Right cardiac atrium (tissue), 5 donors: ENCODE measurements at regions of chr7 and their contacts with region 1.

Region 1: DNA sequence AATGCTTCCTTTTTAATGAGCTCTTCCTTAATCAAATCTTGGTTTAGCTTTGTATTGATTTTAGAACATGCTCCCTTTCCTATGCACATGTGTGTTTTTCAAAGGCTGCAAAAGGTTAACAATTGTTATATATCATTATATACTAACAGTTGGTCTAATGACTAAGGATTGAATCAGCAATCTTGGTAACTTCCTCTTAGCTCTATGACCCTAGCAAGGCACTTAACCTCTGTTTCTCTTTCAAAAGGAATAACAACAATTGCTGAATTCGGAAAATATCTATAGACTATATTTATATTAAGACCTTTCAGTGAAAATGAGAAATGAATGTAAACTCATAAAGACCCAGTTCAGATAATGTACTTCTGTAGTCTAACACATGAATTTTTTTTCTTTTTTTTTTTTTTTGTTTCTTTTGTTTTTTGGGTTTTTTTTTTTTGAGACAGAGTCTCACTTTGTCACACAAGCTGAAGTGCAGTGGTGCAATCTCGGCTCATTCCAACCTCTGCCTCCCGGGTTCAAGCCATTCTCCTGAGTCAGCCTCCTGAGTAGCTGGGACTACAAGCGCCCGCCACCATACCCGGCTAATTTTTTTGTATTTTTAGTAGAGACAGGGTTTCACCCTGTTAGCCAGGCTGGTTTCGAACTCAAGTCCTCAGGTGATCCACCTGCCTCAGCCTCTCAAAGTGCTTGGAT is 48.8 kb downstream of the HOXA1 start:
- DNase-seq: no peak
- ATAC-seq: no peak
- H3K4me3 ChIP-seq: no peak overlapping the region
- H3K27ac ChIP-seq: no peak overlapping the region
- H3K4me1 ChIP-seq: no peaks in the 10 kb centered on the region
- H3K27me3 ChIP-seq: no peaks in the 10 kb centered on the region

Region 2: DNA sequence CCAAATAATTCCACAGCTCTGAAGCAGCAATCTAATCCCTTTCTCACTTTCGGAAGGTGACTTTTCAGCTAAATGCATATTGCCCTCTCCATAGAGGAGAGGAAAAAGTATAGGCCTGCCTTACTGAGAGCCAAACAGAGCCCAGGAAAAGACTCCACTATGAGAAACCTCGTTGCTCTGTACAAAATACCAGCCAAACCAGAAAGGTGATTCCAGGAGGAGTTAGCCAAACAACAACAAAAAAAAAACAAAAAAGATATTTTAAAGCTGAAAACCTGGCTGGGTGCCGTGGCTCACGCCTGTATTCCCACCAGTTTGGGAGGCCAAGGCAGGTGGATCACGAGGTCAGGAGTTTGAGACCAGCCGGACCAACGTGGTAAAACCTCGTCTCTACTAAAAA is 21.7 kb before region 1 on chr7:
- intact Hi-C with region 1: loop called in 1 of 4 experiments (anchors 2 kb)
- DNase-seq: no peak
- ATAC-seq: no peak
- H3K4me3 ChIP-seq: no peak overlapping the region
- H3K27ac ChIP-seq: no peak overlapping the region
- H3K4me1 ChIP-seq: no peaks in the 10 kb centered on the region
- H3K27me3 ChIP-seq: no peaks in the 10 kb centered on the region